Aorta (tissue), 5 donors: ENCODE measurements at regions of chr5 and their contacts with region 1.

Region 1: DNA sequence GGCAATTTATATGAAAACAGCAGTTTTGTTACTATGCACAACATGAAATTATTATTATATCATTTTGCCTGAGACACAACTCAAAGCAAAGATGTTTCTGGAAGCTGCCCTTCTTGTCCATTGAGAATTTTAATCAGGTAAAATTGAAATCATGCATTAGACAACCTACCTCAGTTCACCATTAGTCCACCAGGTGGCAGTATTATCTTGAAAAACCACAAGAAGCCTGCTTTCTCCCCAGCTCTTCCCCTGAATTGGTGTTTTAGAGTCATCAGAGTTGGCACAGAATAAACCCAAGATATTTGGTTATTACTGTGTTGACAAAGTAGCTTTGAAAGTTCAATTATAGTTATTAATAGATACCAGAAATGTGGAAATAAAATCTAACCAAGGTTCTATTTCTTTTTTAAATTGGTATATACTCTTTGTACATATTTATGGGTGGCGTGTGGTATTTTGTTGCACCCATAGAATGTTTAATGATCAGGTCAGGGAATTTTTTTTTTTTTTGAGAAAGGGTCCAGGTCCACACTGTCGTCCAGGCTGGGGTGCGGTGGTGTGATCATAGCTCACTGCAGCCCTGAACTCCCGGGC is 25.7 kb downstream of the UTP15 start:
- DNase-seq: no peak
- ATAC-seq: peak; percentile 88
- H3K4me3 ChIP-seq: no peak overlapping the region
- H3K27ac ChIP-seq: no peak overlapping the region
- H3K4me1 ChIP-seq: no peaks in the 10 kb centered on the region
- H3K27me3 ChIP-seq: no peaks in the 10 kb centered on the region

Region 2: DNA sequence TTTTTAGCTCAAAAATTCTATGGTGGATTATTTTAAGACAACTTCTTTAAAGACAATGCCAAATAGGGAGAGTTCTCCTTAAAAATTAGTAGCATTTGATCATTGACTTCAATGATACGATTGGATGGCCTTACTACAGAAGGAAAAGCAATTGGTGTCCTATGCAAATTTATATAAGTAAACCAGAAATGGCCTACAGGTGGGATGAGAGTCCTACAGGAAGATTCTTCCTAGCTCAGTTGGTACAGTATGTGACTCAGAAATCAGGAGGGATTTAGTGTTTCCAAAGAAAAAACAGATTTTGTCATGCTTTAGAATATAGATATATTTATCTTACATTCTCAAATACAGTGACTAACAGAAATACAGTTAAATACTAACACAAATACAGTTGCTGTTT is 32.2 kb before region 1 on chr5:
- intact Hi-C with region 1: no loop called
- DNase-seq: no peak
- ATAC-seq: no peak
- H3K4me3 ChIP-seq: no peak overlapping the region
- H3K27ac ChIP-seq: no peak overlapping the region
- H3K4me1 ChIP-seq: no peaks in the 10 kb centered on the region
- H3K27me3 ChIP-seq: no peaks in the 10 kb centered on the region

Region 3: GRCh38 chr5:73792687-73793320 is 201.6 kb after region 1 on chr5:
- intact Hi-C with region 1: loop called (anchors 1 kb)
- DNase-seq: peak; percentile 76 to 85
- ATAC-seq: peak; percentile 88
- H3K4me3 ChIP-seq: no peak overlapping the region
- H3K27ac ChIP-seq: no peak overlapping the region
- H3K4me1 ChIP-seq: peaks cover 0 to 3% of the 10 kb centered on the region in 2 donors
- H3K27me3 ChIP-seq: no peaks in the 10 kb centered on the region